ENCODE measurements at regions of chr2 and their contacts with region 1.

Region 1: DNA sequence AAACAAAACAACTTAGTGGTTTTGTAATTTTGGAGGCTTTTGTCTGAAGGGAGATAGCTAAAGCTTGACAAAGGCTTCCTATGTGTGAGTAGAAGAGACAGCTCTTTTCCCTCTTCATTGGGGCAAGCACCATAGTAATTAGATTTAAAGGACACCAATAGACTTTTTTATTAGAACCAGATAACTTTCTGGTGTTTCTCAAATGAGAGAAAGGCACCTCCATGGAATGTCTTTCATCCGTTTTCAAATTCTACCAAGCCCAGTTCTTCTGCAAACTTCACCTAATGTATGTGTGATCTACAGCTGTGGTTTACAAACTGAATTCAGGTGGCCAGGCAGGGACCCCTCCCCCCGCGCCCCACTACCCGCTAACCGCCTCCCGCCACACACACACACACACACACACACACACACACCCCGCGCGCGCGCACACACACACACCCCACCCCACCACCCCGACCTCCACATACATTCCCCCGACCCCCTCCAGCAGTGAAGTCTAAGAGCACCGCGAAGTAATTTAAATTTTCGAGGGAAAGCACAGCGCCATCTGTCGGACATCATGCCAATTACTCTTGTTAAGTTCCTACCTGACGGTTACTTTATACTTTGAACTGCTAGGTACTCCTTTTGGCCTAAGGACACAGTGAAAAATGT is 31.6 kb upstream of the PPP1R1C start:
- DNase-seq: peak; percentile 21 to 57 (median 47)
- ATAC-seq: peak; percentile 89
- H3K4me3 ChIP-seq: no peak overlapping the region
- H3K4me3 Mint-ChIP-seq: peak overlapping the region; percentile 12 to 83 (median 70)
- H3K27ac ChIP-seq: no peak overlapping the region
- H3K27ac Mint-ChIP-seq: peak overlapping the region in 1 of 9 donors; percentile 51
- H3K4me1 ChIP-seq: no peaks in the 10 kb centered on the region
- H3K4me1 Mint-ChIP-seq: peaks cover 4 to 14% (median 13%) of the 10 kb centered on the region in 7 donors
- H3K27me3 ChIP-seq: no peaks in the 10 kb centered on the region
- H3K27me3 Mint-ChIP-seq: peaks cover 5 to 22% (median 11%) of the 10 kb centered on the region in 5 donors

Region 2: GRCh38 chr2:180125245-180125962 is 1828.6 kb before region 1 on chr2:
- CTCF ChIA-PET with region 1: no interaction called
- POLR2A ChIA-PET with region 1: no interaction called
- intact Hi-C with region 1: loop called in 1 of 2 experiments (anchors 1 kb)
- DNase-seq: peak in 7 of 9 donors; percentile 18 to 43 (median 27)
- ATAC-seq: peak; percentile 86
- H3K4me3 ChIP-seq: no peak overlapping the region
- H3K4me3 Mint-ChIP-seq: peak overlapping the region in 4 of 10 donors; percentile 4 to 58 (median 24)
- H3K27ac ChIP-seq: no peak overlapping the region
- H3K27ac Mint-ChIP-seq: no peak overlapping the region
- H3K4me1 ChIP-seq: no peaks in the 10 kb centered on the region
- H3K4me1 Mint-ChIP-seq: peaks cover 0 to 6% (median 3%) of the 10 kb centered on the region in 7 donors
- H3K27me3 ChIP-seq: no peaks in the 10 kb centered on the region
- H3K27me3 Mint-ChIP-seq: peaks cover 0 to 26% (median 13%) of the 10 kb centered on the region in 5 donors

Region 3: DNA sequence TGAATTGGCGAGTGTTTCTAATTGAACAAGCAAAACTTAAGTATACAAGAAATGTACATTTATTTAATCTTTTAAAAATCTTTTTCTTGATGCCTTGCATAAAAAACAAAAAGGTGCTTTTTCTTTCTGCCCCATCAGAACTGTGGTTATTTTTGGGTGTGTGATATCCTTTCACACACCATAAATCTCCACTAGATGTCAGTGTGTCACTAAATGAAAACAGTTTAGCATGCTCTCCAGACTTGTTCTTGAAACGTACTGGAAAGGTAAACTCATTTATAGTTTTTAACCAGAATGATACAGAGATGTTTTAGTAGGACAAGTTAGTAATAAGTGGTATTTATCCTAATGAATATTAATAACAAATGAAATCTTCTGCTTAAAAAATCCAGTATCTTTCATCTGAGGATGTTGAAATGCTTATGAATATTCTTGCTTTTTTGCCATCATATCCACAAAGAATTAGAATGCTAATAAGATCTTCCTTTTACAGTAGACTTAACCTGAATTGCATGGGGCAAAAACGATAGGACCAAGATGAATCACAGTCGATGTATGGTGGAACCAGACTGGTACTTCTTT is 876.8 kb before region 1 on chr2:
- CTCF ChIA-PET with region 1: no interaction called
- POLR2A ChIA-PET with region 1: no interaction called
- intact Hi-C with region 1: loop called (anchors 1 to 5 kb)
- DNase-seq: peak in 7 of 9 donors; percentile 49 to 76 (median 64)
- ATAC-seq: peak; percentile 90
- H3K4me3 ChIP-seq: no peak overlapping the region
- H3K4me3 Mint-ChIP-seq: no peak overlapping the region
- H3K27ac ChIP-seq: no peak overlapping the region
- H3K27ac Mint-ChIP-seq: no peak overlapping the region
- H3K4me1 ChIP-seq: no peaks in the 10 kb centered on the region
- H3K4me1 Mint-ChIP-seq: peaks cover 0 to 11% (median 0%) of the 10 kb centered on the region in 7 donors
- H3K27me3 ChIP-seq: no peaks in the 10 kb centered on the region
- H3K27me3 Mint-ChIP-seq: peaks cover 0 to 14% (median 0%) of the 10 kb centered on the region in 5 donors

Region 4: GRCh38 chr2:181348107-181348837 is 605.7 kb before region 1 on chr2:
- CTCF ChIA-PET with region 1: no interaction called
- POLR2A ChIA-PET with region 1: no interaction called
- intact Hi-C with region 1: no loop called
- DNase-seq: no peak
- ATAC-seq: no peak
- H3K4me3 ChIP-seq: no peak overlapping the region
- H3K4me3 Mint-ChIP-seq: no peak overlapping the region
- H3K27ac ChIP-seq: no peak overlapping the region
- H3K27ac Mint-ChIP-seq: no peak overlapping the region
- H3K4me1 ChIP-seq: no peaks in the 10 kb centered on the region
- H3K4me1 Mint-ChIP-seq: peaks cover 4 to 11% (median 9%) of the 10 kb centered on the region in 7 donors
- H3K27me3 ChIP-seq: no peaks in the 10 kb centered on the region
- H3K27me3 Mint-ChIP-seq: no peaks in the 10 kb centered on the region

Region 5: GRCh38 chr2:181573140-181573736 is 380.8 kb before region 1 on chr2:
- CTCF ChIA-PET with region 1: no interaction called
- POLR2A ChIA-PET with region 1: no interaction called
- intact Hi-C with region 1: loop called in 1 of 2 experiments (anchors 10 kb)
- DNase-seq: peak in 1 of 9 donors; percentile 13
- ATAC-seq: no peak
- H3K4me3 ChIP-seq: no peak overlapping the region
- H3K4me3 Mint-ChIP-seq: no peak overlapping the region
- H3K27ac ChIP-seq: no peak overlapping the region
- H3K27ac Mint-ChIP-seq: no peak overlapping the region
- H3K4me1 ChIP-seq: no peaks in the 10 kb centered on the region
- H3K4me1 Mint-ChIP-seq: peaks cover 0 to 3% (median 1%) of the 10 kb centered on the region in 7 donors
- H3K27me3 ChIP-seq: peaks cover 0 to 4% of the 10 kb centered on the region in 2 donors
- H3K27me3 Mint-ChIP-seq: peaks cover 0 to 25% (median 4%) of the 10 kb centered on the region in 5 donors

Region 6: GRCh38 chr2:181742922-181743722 is 210.9 kb before region 1 on chr2:
- CTCF ChIA-PET with region 1: interaction called, 6 read pairs
- POLR2A ChIA-PET with region 1: no interaction called
- intact Hi-C with region 1: loop called (anchors 1 kb)
- DNase-seq: peak in 5 of 9 donors; percentile 17 to 35 (median 29)
- ATAC-seq: peak; percentile 49
- H3K4me3 ChIP-seq: no peak overlapping the region
- H3K4me3 Mint-ChIP-seq: no peak overlapping the region
- H3K27ac ChIP-seq: no peak overlapping the region
- H3K27ac Mint-ChIP-seq: no peak overlapping the region
- H3K4me1 ChIP-seq: no peaks in the 10 kb centered on the region
- H3K4me1 Mint-ChIP-seq: no peaks in the 10 kb centered on the region
- H3K27me3 ChIP-seq: no peaks in the 10 kb centered on the region
- H3K27me3 Mint-ChIP-seq: peaks cover 0 to 22% (median 3%) of the 10 kb centered on the region in 5 donors

Region 7: DNA sequence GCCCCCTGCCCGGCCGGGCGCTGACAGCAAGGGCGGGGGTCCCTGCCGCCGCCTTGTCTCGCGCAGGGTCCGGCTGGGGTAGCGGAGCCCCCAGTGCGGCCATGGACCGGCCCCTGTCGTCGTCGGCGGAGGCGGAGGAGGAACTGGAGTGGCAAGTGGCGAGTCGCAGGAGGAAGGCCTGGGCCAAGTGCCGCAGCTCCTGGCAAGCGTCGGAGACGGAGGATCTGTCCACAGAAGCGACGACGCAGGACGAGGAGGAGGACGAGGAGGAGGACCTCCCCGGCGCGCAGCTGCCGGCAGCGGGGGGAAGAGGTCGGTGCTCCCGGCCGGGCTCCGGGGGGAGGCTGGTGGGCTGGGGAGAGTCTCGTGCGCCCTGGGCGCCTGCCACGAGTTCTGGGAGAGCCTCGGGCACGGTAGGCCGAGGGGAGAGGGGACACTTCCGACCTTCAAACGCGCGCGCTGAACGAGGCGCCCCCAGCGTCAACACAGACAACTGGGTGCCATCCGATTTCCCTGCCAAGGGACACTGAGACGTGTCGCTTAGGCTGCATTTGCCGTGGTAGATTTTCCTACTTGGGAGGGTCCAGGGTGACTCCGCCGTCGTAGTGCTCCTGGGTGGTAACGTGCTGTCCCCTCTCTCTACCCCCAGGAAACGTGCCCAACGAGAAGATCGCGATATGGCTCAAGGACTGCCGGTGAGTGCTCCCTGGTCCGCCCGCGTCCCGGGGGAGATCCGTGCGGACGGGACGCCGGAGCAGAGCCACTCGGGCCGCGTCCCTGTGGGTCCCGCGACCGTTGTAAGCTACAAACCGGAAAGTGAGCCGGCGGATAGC is 61.8 kb before region 1 on chr2:
- CTCF ChIA-PET with region 1: no interaction called
- POLR2A ChIA-PET with region 1: no interaction called
- intact Hi-C with region 1: loop called in 1 of 2 experiments (anchors 2 kb)
- DNase-seq: peak; percentile 37 to 68 (median 65)
- ATAC-seq: peak; percentile 66
- H3K4me3 ChIP-seq: peak overlapping the region; percentile 85
- H3K4me3 Mint-ChIP-seq: peak overlapping the region; percentile 90 to 99 (median 97)
- H3K27ac ChIP-seq: peak overlapping the region; percentile 76
- H3K27ac Mint-ChIP-seq: peak overlapping the region; percentile 74 to 93 (median 89)
- H3K4me1 ChIP-seq: peaks cover 4 to 22% of the 10 kb centered on the region in 2 donors
- H3K4me1 Mint-ChIP-seq: peaks cover 25 to 49% (median 44%) of the 10 kb centered on the region in 7 donors
- H3K27me3 ChIP-seq: no peaks in the 10 kb centered on the region
- H3K27me3 Mint-ChIP-seq: peaks cover 11 to 35% (median 20%) of the 10 kb centered on the region in 5 donors

Region 8: DNA sequence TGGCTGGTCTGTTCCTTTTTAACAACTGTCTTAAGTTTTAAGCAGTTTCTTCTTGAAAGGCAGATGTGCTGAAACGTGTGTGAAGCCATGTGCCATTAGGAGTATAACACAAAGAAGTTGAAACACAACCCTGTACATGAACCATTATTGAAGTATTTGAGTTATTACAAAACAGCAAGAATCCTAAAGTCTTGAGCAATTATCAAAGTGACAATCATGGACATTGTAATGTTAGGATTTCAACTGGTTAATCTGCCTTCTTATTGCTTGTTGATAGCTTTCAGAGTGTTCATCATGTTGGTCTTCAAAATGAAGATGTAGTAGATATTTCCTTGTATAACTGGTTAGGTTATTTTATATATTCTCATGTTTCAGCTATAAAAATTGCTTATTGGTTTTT is 52.6 kb after region 1 on chr2:
- CTCF ChIA-PET with region 1: no interaction called
- POLR2A ChIA-PET with region 1: no interaction called
- intact Hi-C with region 1: no loop called
- DNase-seq: no peak
- ATAC-seq: no peak
- H3K4me3 ChIP-seq: no peak overlapping the region
- H3K4me3 Mint-ChIP-seq: no peak overlapping the region
- H3K27ac ChIP-seq: no peak overlapping the region
- H3K27ac Mint-ChIP-seq: no peak overlapping the region
- H3K4me1 ChIP-seq: no peaks in the 10 kb centered on the region
- H3K4me1 Mint-ChIP-seq: no peaks in the 10 kb centered on the region
- H3K27me3 ChIP-seq: no peaks in the 10 kb centered on the region
- H3K27me3 Mint-ChIP-seq: peaks cover 0 to 7% (median 0%) of the 10 kb centered on the region in 5 donors

Region 9: GRCh38 chr2:182018218-182018617 is 64.2 kb after region 1 on chr2:
- CTCF ChIA-PET with region 1: no interaction called
- POLR2A ChIA-PET with region 1: no interaction called
- intact Hi-C with region 1: no loop called
- DNase-seq: no peak
- ATAC-seq: no peak
- H3K4me3 ChIP-seq: no peak overlapping the region
- H3K4me3 Mint-ChIP-seq: no peak overlapping the region
- H3K27ac ChIP-seq: no peak overlapping the region
- H3K27ac Mint-ChIP-seq: no peak overlapping the region
- H3K4me1 ChIP-seq: no peaks in the 10 kb centered on the region
- H3K4me1 Mint-ChIP-seq: no peaks in the 10 kb centered on the region
- H3K27me3 ChIP-seq: no peaks in the 10 kb centered on the region
- H3K27me3 Mint-ChIP-seq: peaks cover 0 to 6% (median 4%) of the 10 kb centered on the region in 5 donors

Region 10: GRCh38 chr2:182259629-182260150 is 305.7 kb after region 1 on chr2:
- CTCF ChIA-PET with region 1: no interaction called
- POLR2A ChIA-PET with region 1: no interaction called
- intact Hi-C with region 1: no loop called
- DNase-seq: no peak
- ATAC-seq: no peak
- H3K4me3 ChIP-seq: no peak overlapping the region
- H3K4me3 Mint-ChIP-seq: no peak overlapping the region
- H3K27ac ChIP-seq: no peak overlapping the region
- H3K27ac Mint-ChIP-seq: no peak overlapping the region
- H3K4me1 ChIP-seq: no peaks in the 10 kb centered on the region
- H3K4me1 Mint-ChIP-seq: no peaks in the 10 kb centered on the region
- H3K27me3 ChIP-seq: no peaks in the 10 kb centered on the region
- H3K27me3 Mint-ChIP-seq: peaks cover 0 to 8% (median 5%) of the 10 kb centered on the region in 5 donors

Measured in naive thymus-derived CD4-positive, alpha-beta T cell (primary cell).